IMR-90 (cell line): ENCODE measurements at regions of chr2 and their contacts with region 1.

Region 1: GRCh38 chr2:25376750-25377621 is 35.3 kb upstream of the DNMT3A start:
- DNase-seq: peak; percentile 79
- ATAC-seq: peak; percentile 100
- H3K4me3 ChIP-seq: peak overlapping the region; percentile 18; the same call in 1 of the 2 replicates
- H3K27ac ChIP-seq: no peak overlapping the region
- H3K4me1 ChIP-seq: peaks cover 8% of the 10 kb centered on the region
- H3K27me3 ChIP-seq: no peaks in the 10 kb centered on the region
- CTCF ChIP-seq: peak; percentile 96
- POLR2A ChIP-seq: 0 out of 2 replicates have a peak, but pooled peaks have one; percentile 38
- RAD21 ChIP-seq: peak; percentile 68

Region 2: GRCh38 chr2:25342372-25343186 is 34.4 kb before region 1 on chr2:
- CTCF ChIA-PET with region 1: interaction called, 3 read pairs
- POLR2A ChIA-PET with region 1: no interaction called
- dilution Hi-C with region 1: no loop called
- in situ Hi-C with region 1: no loop called
- intact Hi-C with region 1: loop called (anchors 2 kb)
- DNase-seq: peak; percentile 82
- ATAC-seq: peak; percentile 87
- H3K4me3 ChIP-seq: peak overlapping the region; percentile 60
- H3K27ac ChIP-seq: no peak overlapping the region; the same call in 1 of the 2 replicates
- H3K4me1 ChIP-seq: peaks cover 12% of the 10 kb centered on the region; the same call in 1 of the 2 replicates
- H3K27me3 ChIP-seq: no peaks in the 10 kb centered on the region
- CTCF ChIP-seq: peak; percentile 97
- POLR2A ChIP-seq: no peak
- RAD21 ChIP-seq: peak; percentile 72